ENCODE measurements at regions of chr11 and their contacts with region 1.

Region 1: GRCh38 chr11:14907411-14908213 is 15.6 kb upstream of the CYP2R1 start:
- DNase-seq: peak; percentile 94
- H3K4me3 Mint-ChIP-seq: no peak overlapping the region
- H3K27ac Mint-ChIP-seq: no peak overlapping the region
- H3K4me1 Mint-ChIP-seq: peaks cover 39% of the 10 kb centered on the region
- H3K27me3 Mint-ChIP-seq: no peaks in the 10 kb centered on the region

Region 2: DNA sequence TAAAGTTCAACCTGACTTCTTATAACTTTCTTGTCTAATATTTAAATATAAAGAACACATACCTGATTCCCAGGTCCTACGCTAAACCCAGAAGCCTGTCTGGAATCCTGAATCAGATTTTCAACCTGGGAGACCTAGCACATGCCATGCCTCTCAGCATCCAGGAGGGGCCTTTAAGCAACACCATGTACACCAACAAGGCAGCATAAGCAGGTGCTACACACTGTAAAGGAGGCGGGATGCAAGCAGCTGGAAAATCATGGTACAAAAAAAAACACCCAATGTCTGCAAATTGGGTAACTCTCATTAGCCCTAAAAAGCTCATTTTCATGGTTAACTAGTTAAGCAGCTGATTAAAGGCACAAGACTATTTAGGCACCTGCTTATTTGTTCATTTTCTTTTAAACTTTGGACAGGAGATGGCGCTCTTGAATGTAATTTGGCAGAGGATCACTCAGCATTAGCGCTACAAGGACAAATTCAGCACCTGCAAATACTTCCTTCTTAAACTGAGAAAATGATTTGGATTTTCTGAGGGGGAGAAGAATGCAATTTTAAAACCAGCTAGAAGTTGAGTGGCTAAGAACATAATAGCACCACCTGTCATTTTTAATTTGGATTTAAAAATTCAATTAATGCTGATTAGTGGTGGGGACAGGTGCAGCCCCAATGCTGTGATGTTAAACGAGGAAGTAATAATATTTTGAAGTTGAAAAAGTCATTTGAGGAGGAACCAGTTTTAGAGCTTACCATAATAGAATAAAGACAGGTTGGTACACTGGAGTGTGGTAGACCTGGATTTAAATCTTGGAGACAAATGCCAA is 1135.2 kb before region 1 on chr11:
- CTCF ChIA-PET with region 1: no interaction called
- intact Hi-C with region 1: loop called (anchors 10 kb)
- DNase-seq: peak; percentile 35
- H3K4me3 Mint-ChIP-seq: no peak overlapping the region
- H3K27ac Mint-ChIP-seq: no peak overlapping the region
- H3K4me1 Mint-ChIP-seq: no peaks in the 10 kb centered on the region
- H3K27me3 Mint-ChIP-seq: no peaks in the 10 kb centered on the region

Region 3: GRCh38 chr11:14132312-14132711 is 775.3 kb before region 1 on chr11:
- CTCF ChIA-PET with region 1: no interaction called
- intact Hi-C with region 1: no loop called
- DNase-seq: no peak
- H3K4me3 Mint-ChIP-seq: no peak overlapping the region
- H3K27ac Mint-ChIP-seq: no peak overlapping the region
- H3K4me1 Mint-ChIP-seq: no peaks in the 10 kb centered on the region
- H3K27me3 Mint-ChIP-seq: no peaks in the 10 kb centered on the region

Region 4: DNA sequence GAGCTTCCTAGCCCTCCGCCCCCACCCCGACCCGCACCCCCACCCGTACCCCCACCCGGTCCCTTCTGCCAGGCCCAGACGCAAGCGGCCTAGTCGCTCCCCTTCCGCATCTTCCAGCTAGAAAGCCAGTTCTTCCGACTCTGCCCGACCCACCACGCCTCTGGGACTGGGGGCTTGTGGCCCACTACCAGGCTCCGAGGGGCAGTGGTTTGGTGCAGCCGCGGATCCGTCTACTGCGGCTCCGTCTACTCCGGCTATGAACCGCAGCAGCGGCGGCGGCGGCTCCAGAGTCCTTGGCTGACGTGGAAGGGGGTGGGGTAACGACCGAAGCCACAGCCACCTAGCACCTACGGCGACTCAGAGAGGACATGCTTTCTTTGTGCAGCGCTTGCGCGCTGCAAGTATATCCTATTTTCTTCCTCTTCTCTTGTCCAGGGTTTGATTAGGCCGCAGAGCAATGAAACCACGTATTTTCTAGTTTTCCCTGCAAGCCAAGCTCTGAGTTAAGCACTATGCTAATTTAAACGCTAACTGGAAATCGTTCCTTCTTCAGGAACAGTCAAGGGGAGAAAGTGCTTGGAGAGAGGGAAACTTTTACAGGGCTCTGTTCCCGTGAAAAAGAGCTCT is 407.9 kb before region 1 on chr11 and contains the start of gene COPB1:
- CTCF ChIA-PET with region 1: interaction called, 13 read pairs
- intact Hi-C with region 1: loop called (anchors 1 kb)
- DNase-seq: peak; percentile 97
- H3K4me3 Mint-ChIP-seq: peak within 1 kb of the TSS; percentile 99
- H3K27ac Mint-ChIP-seq: peak within 1 kb of the TSS; percentile 99
- H3K4me1 Mint-ChIP-seq: peaks cover 40% of the 10 kb centered on the region
- H3K27me3 Mint-ChIP-seq: no peaks in the 10 kb centered on the region
- total RNA-seq, gene COPB1: 111 to 112 TPM

Region 5: DNA sequence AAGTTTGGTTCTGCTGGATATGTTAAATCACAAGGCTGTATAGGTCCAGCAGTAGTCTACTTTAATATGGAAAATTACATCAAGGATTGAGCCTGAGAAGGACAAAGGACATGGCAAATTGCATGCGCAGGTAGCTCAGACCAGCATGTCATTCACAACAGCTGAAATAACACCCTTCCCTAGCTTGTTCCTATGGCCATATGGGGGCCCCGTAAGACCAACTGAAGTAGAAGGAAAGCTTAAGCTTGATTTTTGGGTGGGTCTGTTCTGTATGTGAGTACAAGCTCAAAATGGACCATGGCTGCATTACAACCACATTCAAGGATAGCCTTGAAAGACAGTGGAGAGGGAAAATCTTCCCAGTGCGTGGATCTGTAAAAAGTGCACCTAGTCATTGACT is 284.6 kb before region 1 on chr11:
- CTCF ChIA-PET with region 1: interaction called, 13 read pairs
- intact Hi-C with region 1: loop called (anchors 1 kb)
- DNase-seq: no peak
- H3K4me3 Mint-ChIP-seq: no peak overlapping the region
- H3K27ac Mint-ChIP-seq: no peak overlapping the region
- H3K4me1 Mint-ChIP-seq: peaks cover 68% of the 10 kb centered on the region
- H3K27me3 Mint-ChIP-seq: no peaks in the 10 kb centered on the region

Region 6: DNA sequence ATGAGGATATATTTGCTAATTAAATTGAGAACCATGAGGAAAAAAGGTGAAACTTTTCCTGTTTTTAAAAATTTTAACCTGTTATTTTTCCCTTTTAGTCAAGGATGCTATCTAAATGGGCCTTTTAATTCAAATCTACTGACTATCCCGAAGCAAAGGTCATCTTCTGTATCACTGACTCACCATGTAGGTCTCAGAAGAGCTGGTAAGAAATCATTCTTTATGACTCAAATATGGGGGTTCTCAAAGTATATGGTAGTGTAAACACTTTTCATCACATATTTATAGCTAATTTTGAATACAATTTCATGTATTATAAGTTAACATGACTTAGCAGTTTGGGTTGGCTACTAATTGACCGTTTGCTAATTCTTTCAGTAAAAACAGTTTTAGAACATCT is 103.8 kb before region 1 on chr11:
- CTCF ChIA-PET with region 1: interaction called, 11 read pairs
- intact Hi-C with region 1: no loop called
- DNase-seq: no peak
- H3K4me3 Mint-ChIP-seq: no peak overlapping the region
- H3K27ac Mint-ChIP-seq: no peak overlapping the region
- H3K4me1 Mint-ChIP-seq: peaks cover 9% of the 10 kb centered on the region
- H3K27me3 Mint-ChIP-seq: no peaks in the 10 kb centered on the region

Region 7: DNA sequence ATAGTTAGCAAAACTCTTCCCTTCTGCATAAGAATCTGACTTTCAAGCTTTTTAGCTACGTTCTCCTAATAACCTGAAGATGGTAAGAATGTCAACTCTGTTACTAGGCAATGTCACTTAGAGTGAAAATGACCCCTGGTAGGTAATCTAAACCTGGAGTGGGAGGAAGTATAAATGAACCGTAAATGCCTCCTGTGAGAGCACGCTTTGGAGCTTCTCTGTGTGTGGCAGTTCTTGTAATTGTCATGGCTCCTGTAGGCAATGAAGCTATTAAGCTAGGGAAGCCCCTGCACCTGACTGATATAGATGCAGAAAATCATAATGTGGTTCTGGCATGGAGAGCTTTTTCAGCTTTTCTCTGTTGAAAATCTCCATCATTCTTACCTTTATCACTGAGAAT is 35.1 kb after region 1 on chr11:
- CTCF ChIA-PET with region 1: interaction called, 12 read pairs
- intact Hi-C with region 1: no loop called
- DNase-seq: no peak
- H3K4me3 Mint-ChIP-seq: no peak overlapping the region
- H3K27ac Mint-ChIP-seq: no peak overlapping the region
- H3K4me1 Mint-ChIP-seq: no peaks in the 10 kb centered on the region
- H3K27me3 Mint-ChIP-seq: no peaks in the 10 kb centered on the region

Region 8: GRCh38 chr11:15101072-15101709 is 193.6 kb after region 1 on chr11:
- CTCF ChIA-PET with region 1: interaction called, 12 read pairs
- intact Hi-C with region 1: no loop called
- DNase-seq: peak; percentile 71
- H3K4me3 Mint-ChIP-seq: no peak overlapping the region
- H3K27ac Mint-ChIP-seq: no peak overlapping the region
- H3K4me1 Mint-ChIP-seq: no peaks in the 10 kb centered on the region
- H3K27me3 Mint-ChIP-seq: peaks cover 10% of the 10 kb centered on the region